ENCODE measurements at regions of chr4 and their contacts with region 1.

Region 1: GRCh38 chr4:38759113-38759789 is 23.5 kb downstream of the TLR10 start:
- DNase-seq: no peak
- H3K4me3 ChIP-seq: no peak overlapping the region
- H3K27ac ChIP-seq: no peak overlapping the region
- H3K4me1 ChIP-seq: peaks cover 0 to 6% (median 4%) of the 10 kb centered on the region in 4 donors
- H3K27me3 ChIP-seq: no peaks in the 10 kb centered on the region
- CTCF ChIP-seq: peak; percentile 65 to 75 (median 72)
- EP300 ChIP-seq: no peak
- POLR2A ChIP-seq: no peak

Region 2: GRCh38 chr4:38782452-38783108 is 23.3 kb after region 1 on chr4 and contains the start of gene TLR10:
- intact Hi-C with region 1: loop called (anchors 1 kb)
- DNase-seq: no peak
- H3K4me3 ChIP-seq: no peak within 1 kb of the TSS
- H3K27ac ChIP-seq: no peak within 1 kb of the TSS
- H3K4me1 ChIP-seq: no peaks in the 10 kb centered on the region
- H3K27me3 ChIP-seq: no peaks in the 10 kb centered on the region
- CTCF ChIP-seq: peak; percentile 70 to 73 (median 72)
- EP300 ChIP-seq: no peak
- POLR2A ChIP-seq: no peak
- total RNA-seq, gene TLR10: 0.17 TPM in 1 of 4 donors, not detected in the others

Region 3: GRCh38 chr4:38821739-38822138 is 62.5 kb after region 1 on chr4:
- intact Hi-C with region 1: no loop called
- DNase-seq: peak; percentile 66
- H3K4me3 ChIP-seq: no peak overlapping the region
- H3K27ac ChIP-seq: no peak overlapping the region
- H3K4me1 ChIP-seq: no peaks in the 10 kb centered on the region
- H3K27me3 ChIP-seq: no peaks in the 10 kb centered on the region
- CTCF ChIP-seq: no peak
- EP300 ChIP-seq: no peak
- POLR2A ChIP-seq: no peak

Region 4: DNA sequence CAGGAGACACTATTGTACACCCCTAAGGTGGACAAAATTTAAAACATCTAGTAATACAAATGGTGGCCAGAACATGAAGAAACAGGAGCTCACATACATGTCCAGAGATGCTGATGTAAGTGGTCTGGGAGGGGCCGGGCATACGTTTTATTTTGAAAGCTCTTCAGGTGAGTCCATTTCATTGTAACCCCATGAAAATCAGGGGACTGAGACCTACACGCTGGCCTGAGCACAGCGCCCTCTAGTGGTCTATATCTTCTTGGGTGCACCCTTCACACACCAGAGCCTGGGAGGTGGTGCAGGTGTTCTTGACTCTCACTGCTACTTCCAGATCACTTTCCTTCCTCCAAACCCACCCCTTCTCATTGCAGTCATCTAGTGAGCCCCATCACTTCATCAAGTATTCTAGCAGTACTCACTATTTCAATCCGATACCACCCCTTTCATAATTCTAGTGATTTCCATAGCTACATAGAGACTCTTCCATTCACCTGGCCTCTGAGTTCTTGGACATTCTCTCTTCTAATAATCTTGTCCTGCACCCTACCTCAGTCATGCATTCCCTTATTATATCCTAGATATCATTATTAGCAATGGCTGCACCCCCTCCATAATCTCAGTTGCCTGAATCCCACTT is 101.7 kb after region 1 on chr4:
- intact Hi-C with region 1: loop called (anchors 5 kb)
- DNase-seq: no peak
- H3K4me3 ChIP-seq: no peak overlapping the region
- H3K27ac ChIP-seq: no peak overlapping the region
- H3K4me1 ChIP-seq: peaks cover 0 to 13% (median 8%) of the 10 kb centered on the region in 4 donors
- H3K27me3 ChIP-seq: no peaks in the 10 kb centered on the region
- CTCF ChIP-seq: peak in 2 of 3 experiments; percentile 34 to 48
- EP300 ChIP-seq: no peak
- POLR2A ChIP-seq: no peak